ENCODE measurements at regions of chr16 and their contacts with region 1.

Region 1: GRCh38 chr16:48365581-48366164 is 19.5 kb downstream of the SIAH1 start:
- DNase-seq: peak; percentile 91
- H3K4me3 Mint-ChIP-seq: peak overlapping the region; percentile 80
- H3K27ac Mint-ChIP-seq: peak overlapping the region; percentile 95
- H3K4me1 Mint-ChIP-seq: peaks cover 44% of the 10 kb centered on the region
- H3K27me3 Mint-ChIP-seq: no peaks in the 10 kb centered on the region
- CTCF ChIP-seq: no peak

Region 2: GRCh38 chr16:48100696-48101674 is 264.7 kb before region 1 on chr16:
- CTCF ChIA-PET with region 1: no interaction called
- POLR2A ChIA-PET with region 1: no interaction called
- intact Hi-C with region 1: no loop called
- DNase-seq: peak; percentile 55
- H3K4me3 Mint-ChIP-seq: no peak overlapping the region
- H3K27ac Mint-ChIP-seq: no peak overlapping the region
- H3K4me1 Mint-ChIP-seq: no peaks in the 10 kb centered on the region
- H3K27me3 Mint-ChIP-seq: no peaks in the 10 kb centered on the region
- CTCF ChIP-seq: no peak

Region 3: DNA sequence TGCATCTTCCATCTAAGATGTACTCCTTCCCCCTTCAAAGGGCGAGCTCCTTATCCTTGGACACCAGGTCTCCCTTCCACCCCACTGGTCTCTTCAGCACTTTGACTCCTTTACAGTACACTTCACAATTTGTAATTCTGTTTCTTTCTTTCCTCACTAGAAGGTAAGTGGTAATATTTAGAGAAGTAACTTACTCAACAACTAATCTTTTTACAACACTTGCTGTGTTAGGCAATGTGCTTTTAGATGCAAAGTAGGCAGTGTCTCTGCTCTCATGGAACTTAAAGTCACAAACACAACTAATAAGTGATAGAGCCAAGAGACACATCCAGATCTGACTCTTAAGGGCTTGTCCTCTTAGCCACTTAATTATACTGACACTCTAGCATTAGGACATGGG is 13.2 kb after region 1 on chr16:
- CTCF ChIA-PET with region 1: interaction called, 8 read pairs
- POLR2A ChIA-PET with region 1: interaction called, 157 read pairs
- intact Hi-C with region 1: loop called (anchors 1 kb)
- DNase-seq: no peak
- H3K4me3 Mint-ChIP-seq: no peak overlapping the region
- H3K27ac Mint-ChIP-seq: peak overlapping the region; percentile 49
- H3K4me1 Mint-ChIP-seq: peaks cover 45% of the 10 kb centered on the region
- H3K27me3 Mint-ChIP-seq: no peaks in the 10 kb centered on the region
- CTCF ChIP-seq: no peak

Region 4: DNA sequence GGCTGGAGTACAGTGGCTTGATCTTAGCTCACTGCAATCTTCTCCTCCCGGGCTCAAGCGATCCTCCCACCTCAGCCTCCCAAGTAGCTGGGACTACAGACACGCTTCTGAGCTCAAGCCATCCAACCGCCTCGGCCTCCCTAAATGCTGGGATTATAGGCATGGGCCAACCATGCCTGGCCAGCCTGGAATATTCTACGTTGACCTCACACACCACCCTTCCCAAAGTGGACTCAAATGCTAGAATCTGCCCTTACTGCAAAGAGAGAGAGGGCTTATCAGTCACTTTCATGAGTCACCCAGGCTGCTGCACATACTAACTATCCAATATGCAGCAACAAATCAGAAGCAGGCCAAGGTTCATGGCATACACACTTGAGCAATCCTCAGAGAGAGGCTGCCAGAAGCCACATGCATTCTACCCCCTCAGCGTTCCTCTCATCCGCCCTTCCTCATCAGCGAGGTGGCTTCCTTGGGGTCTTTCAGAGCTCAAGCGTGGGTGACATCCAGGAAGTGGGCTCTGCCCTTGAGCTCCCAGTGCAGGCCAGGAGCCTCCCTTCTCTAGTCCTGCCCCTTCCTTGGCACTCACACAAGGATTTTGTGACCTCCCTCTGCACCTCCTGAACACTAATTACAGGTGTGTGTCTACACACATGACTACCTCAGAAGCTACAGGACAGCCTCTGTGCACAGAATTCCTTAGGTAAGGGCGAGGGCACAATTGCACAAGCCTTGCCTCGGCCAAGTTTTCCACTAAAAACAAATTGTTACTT is 44.4 kb after region 1 on chr16:
- CTCF ChIA-PET with region 1: interaction called, 14 read pairs
- POLR2A ChIA-PET with region 1: interaction called, 37 read pairs
- intact Hi-C with region 1: no loop called
- DNase-seq: peak; percentile 91
- H3K4me3 Mint-ChIP-seq: peak overlapping the region; percentile 42
- H3K27ac Mint-ChIP-seq: peak overlapping the region; percentile 71
- H3K4me1 Mint-ChIP-seq: peaks cover 26% of the 10 kb centered on the region
- H3K27me3 Mint-ChIP-seq: no peaks in the 10 kb centered on the region
- CTCF ChIP-seq: no peak

Region 5: GRCh38 chr16:48499923-48500381 is 134.3 kb after region 1 on chr16:
- CTCF ChIA-PET with region 1: no interaction called
- POLR2A ChIA-PET with region 1: interaction called, 20 read pairs
- intact Hi-C with region 1: no loop called
- DNase-seq: peak; percentile 87
- H3K4me3 Mint-ChIP-seq: no peak overlapping the region
- H3K27ac Mint-ChIP-seq: peak overlapping the region; percentile 73
- H3K4me1 Mint-ChIP-seq: peaks cover 12% of the 10 kb centered on the region
- H3K27me3 Mint-ChIP-seq: no peaks in the 10 kb centered on the region
- CTCF ChIP-seq: no peak

Region 6: GRCh38 chr16:48609652-48610029 is 244.0 kb after region 1 on chr16:
- CTCF ChIA-PET with region 1: interaction called, 5 read pairs
- POLR2A ChIA-PET with region 1: interaction called, 49 read pairs
- intact Hi-C with region 1: no loop called
- DNase-seq: peak; percentile 46
- H3K4me3 Mint-ChIP-seq: no peak overlapping the region
- H3K27ac Mint-ChIP-seq: peak overlapping the region; percentile 100
- H3K4me1 Mint-ChIP-seq: peaks cover 12% of the 10 kb centered on the region
- H3K27me3 Mint-ChIP-seq: no peaks in the 10 kb centered on the region
- CTCF ChIP-seq: no peak

Region 7: GRCh38 chr16:48918520-48919258 is 553.0 kb after region 1 on chr16:
- CTCF ChIA-PET with region 1: no interaction called
- POLR2A ChIA-PET with region 1: no interaction called
- intact Hi-C with region 1: no loop called
- DNase-seq: peak; percentile 43
- H3K4me3 Mint-ChIP-seq: no peak overlapping the region
- H3K27ac Mint-ChIP-seq: no peak overlapping the region
- H3K4me1 Mint-ChIP-seq: peaks cover 11% of the 10 kb centered on the region
- H3K27me3 Mint-ChIP-seq: no peaks in the 10 kb centered on the region
- CTCF ChIP-seq: no peak

Measured in MCF 10A (cell line).